Psoas muscle (tissue), 8 donors: ENCODE measurements at regions of chr12 and their contacts with region 1.

Region 1: DNA sequence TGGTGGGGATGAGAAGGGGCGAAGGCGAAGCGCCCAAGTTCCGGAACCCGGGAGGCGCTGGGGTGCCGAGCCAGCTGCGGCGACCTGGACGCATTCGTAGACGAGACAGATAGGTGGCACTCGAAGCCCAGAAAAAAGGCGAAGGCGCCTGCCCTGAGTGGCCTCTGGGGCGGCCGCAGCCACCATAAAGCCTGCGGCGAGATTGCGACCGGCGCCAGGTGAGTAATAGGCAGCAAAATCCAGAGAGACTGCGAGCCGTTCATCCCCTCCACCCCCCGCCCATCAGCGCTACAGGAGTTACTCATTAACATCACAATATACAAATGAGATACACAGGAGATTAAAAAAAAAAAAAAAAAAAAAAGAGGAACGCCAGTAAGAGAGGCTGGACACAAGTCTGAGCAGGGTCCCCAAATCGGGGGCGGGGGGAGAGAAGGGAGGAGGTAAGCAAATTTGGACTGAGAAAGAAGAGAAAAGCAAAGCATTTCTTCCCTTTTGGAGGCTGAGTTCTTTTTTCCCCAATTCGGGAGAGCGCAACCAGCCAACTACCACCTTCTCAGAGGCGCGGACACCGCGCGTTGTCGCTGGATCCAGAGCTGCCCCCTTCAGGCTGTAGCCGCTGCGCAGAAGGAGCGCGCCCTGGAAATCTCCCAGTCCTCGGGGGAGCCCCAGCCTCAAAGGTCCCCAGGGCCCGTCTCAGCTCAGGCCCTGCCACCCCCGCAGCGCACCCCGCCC is 15.7 kb downstream of the TBX3 start:
- DNase-seq: peak; percentile 84 to 89
- ATAC-seq: peak; percentile 81 to 97 (median 94)
- H3K4me3 ChIP-seq: peak overlapping the region; percentile 62
- H3K27ac ChIP-seq: peak overlapping the region; percentile 55
- H3K4me1 ChIP-seq: no peaks in the 10 kb centered on the region
- H3K27me3 ChIP-seq: peaks cover 7 to 45% (median 17%) of the 10 kb centered on the region in 3 donors
- CTCF ChIP-seq: peak; percentile 62

Region 2: DNA sequence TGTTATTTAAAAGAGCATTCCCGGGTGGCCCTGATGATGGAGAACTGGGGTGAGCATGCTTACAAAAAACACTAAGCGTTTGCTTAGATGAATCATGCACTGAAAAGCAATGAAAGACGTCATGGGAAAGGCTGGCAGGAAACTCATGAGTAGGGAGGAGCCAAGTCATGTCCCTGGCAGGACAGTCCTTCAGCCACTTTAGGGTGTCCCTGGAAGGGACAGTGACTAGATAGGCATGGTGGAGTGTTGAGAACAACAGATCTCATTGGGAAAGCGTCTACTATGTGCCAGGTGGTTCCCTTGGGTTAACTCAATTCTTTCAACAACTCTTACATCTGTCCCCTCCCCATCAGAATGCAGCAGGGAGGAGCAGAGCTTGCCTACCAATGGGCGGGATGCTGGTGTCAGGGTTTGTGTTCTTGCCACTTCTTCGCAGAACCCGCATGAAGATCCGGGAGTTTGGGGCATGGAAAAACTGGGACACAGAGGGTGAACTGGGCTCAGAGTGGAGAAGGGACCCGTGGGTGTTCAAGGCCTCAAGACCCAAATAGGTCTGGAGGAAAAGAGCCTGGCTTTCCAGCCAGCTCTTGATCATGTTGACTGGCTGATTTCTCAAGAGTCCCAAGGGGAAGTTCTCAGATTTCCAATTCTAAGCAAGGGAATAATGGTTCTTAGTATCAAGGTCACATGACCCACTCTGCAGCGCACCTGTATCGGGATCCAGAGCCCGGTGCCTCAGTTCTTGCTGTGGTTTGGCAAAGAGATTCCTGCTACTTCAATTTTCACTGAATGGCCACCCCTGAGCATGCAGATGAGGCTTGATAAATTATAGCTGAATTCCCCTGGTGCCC is 669.6 kb after region 1 on chr12:
- intact Hi-C with region 1: loop called in 1 of 2 experiments (anchors 10 kb)
- DNase-seq: peak; percentile 57 to 71
- ATAC-seq: peak; percentile 87 to 96 (median 96)
- H3K4me3 ChIP-seq: no peak overlapping the region
- H3K27ac ChIP-seq: peak overlapping the region; percentile 72
- H3K4me1 ChIP-seq: peaks cover 4% of the 10 kb centered on the region
- H3K27me3 ChIP-seq: no peaks in the 10 kb centered on the region
- CTCF ChIP-seq: no peak

Region 3: DNA sequence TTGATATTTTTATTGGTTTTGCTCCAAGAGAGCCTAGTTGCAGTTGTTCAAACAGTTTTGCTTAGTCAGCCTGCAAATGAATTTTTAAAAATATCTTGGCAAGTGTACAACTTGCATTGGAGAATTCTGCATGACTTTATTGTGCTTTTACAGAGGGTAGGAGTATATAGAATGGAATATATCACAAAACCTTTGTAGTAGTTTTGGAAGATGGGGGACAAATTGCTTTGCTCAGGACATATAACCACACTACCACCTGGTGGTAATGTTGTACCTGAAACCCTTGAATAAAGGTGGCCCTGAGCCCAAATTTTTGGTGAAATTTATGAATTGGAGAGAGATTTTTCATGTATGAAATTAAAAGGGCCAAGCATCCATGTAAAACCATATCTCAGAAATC is 964.0 kb after region 1 on chr12:
- intact Hi-C with region 1: loop called (anchors 2 to 5 kb)
- DNase-seq: no peak
- ATAC-seq: no peak
- H3K4me3 ChIP-seq: no peak overlapping the region
- H3K27ac ChIP-seq: no peak overlapping the region
- H3K4me1 ChIP-seq: no peaks in the 10 kb centered on the region
- H3K27me3 ChIP-seq: no peaks in the 10 kb centered on the region
- CTCF ChIP-seq: peak; percentile 37

Region 4: DNA sequence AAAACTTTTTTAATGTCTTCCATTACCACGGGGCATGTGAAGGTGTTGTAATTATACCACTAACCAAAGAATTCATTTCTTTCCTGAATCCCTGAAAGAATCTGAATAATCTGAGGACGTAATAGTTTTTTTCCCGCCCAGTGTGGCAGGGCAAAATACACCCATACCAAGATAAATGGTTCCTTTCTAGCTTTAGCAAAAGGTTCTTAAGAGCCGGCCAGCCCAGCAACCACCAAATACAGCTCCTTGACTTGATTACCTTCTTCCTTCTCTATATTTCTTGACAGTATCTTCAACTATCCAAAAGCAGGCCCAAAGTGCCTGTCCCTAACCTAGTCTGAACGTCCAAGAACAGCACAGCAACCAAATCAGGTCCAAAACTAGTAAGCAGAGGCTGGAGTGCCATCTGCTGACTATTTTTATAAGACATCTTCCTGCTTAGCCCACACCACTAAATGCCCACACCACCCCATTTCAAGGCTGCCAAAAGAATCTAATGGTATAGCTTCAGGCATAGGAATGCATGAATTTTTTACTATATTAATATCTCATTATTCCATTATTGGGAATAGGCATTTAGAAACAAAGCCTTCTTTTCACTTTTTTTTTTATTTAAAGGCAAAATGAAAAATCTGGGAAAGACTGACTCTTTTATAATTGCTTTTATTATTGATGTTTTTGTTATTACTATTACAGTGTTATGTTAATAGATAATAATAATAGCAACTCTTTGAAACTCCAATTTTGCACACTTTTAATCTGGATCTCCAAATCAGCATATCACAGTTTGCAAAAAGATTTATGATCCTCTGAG is 1084.8 kb after region 1 on chr12:
- intact Hi-C with region 1: loop called (anchors 1 to 2 kb)
- DNase-seq: no peak
- ATAC-seq: peak; percentile 73 to 95 (median 84)
- H3K4me3 ChIP-seq: no peak overlapping the region
- H3K27ac ChIP-seq: no peak overlapping the region
- H3K4me1 ChIP-seq: no peaks in the 10 kb centered on the region
- H3K27me3 ChIP-seq: peaks cover 0 to 23% (median 6%) of the 10 kb centered on the region in 3 donors
- CTCF ChIP-seq: peak; percentile 71